ENCODE measurements at regions of chr4 and their contacts with region 1.

Region 1: GRCh38 chr4:5824635-5825034 is 68.3 kb downstream of the CRMP1 start:
- DNase-seq: peak; percentile 23
- ATAC-seq: peak; percentile 50
- H3K4me3 ChIP-seq: no peak overlapping the region
- H3K27ac ChIP-seq: no peak overlapping the region
- H3K4me1 ChIP-seq: peaks cover 0 to 7% of the 10 kb centered on the region in 2 experiments; a peak in 1 of 4 replicates
- H3K27me3 ChIP-seq: peaks cover 17% of the 10 kb centered on the region
- CTCF ChIP-seq: peak; percentile 33 to 68 (median 67); a peak in 5 of 6 replicates
- POLR2A ChIP-seq: no peak
- RAD21 ChIP-seq: peak; percentile 51

Region 2: GRCh38 chr4:5956285-5957021 is 131.8 kb after region 1 on chr4:
- CTCF ChIA-PET with region 1: no interaction called
- POLR2A ChIA-PET with region 1: no interaction called
- RAD21 ChIA-PET with region 1: no interaction called
- intact Hi-C with region 1: no loop called
- DNase-seq: no peak
- ATAC-seq: no peak; the same call in 1 of the 2 replicates
- H3K4me3 ChIP-seq: no peak overlapping the region
- H3K27ac ChIP-seq: no peak overlapping the region
- H3K4me1 ChIP-seq: no peaks in the 10 kb centered on the region
- H3K27me3 ChIP-seq: peaks cover 12% of the 10 kb centered on the region; the same call in 1 of the 2 replicates
- CTCF ChIP-seq: no peak
- POLR2A ChIP-seq: no peak
- RAD21 ChIP-seq: no peak

Region 3: DNA sequence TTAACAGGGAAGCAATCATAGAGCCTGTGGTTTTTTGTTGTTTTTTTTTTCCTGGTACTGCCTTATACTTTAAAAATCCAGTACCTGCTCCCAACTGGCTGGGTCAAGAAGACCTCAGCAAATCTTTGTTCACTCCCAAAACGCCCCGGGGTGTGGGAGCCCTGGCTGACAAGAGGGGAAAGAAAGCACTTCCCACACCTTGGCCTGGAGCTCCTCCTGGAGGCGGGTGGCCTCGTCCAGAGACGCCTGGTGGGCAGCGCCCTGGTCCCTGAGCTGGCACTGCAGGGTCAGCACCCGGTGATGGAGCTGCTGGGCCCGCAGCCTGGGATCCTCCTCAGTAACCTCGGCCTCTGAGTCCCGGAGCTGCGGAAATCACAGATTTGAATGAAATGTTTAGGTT is 155.3 kb after region 1 on chr4:
- CTCF ChIA-PET with region 1: interaction called, 18 read pairs
- POLR2A ChIA-PET with region 1: no interaction called
- RAD21 ChIA-PET with region 1: interaction called, 4 read pairs
- intact Hi-C with region 1: loop called (anchors 1 kb)
- DNase-seq: peak; percentile 7
- ATAC-seq: peak; percentile 95
- H3K4me3 ChIP-seq: no peak overlapping the region
- H3K27ac ChIP-seq: no peak overlapping the region
- H3K4me1 ChIP-seq: no peaks in the 10 kb centered on the region
- H3K27me3 ChIP-seq: peaks cover 33% of the 10 kb centered on the region
- CTCF ChIP-seq: peak; percentile 61 to 64 (median 63); a peak in 5 of 6 replicates
- POLR2A ChIP-seq: no peak
- RAD21 ChIP-seq: peak; percentile 75

Region 4: DNA sequence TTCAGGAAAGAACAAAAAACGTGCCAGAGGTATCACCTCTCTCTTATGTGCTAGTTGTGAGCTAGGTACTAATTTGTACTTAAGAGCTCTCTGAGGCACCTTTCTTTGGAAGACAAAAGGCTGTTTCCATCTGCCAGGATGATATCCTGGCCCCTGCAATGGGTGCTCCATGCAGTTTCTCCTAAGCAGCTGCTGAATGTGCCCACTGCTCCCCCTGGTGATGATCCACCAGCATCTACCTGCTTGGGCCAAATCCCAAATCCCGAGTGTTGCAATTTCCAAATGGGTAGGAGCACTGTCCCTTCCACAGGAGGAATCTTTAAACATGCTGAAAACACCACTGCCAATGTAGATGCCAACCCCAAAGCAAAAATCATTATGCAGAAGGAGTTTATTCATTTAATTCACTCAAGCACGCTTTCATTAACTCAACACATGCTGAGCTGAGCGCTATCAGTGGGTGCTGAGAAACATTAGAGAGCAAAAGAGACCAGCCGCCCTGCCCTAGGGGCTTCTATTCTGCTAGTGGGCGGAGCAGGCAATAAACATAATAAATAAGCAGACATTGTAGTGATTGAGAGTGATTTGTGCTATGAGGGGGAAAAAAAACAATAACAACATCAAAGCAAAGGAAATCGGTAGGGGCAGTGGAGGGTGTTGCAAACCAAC is 263.2 kb after region 1 on chr4:
- CTCF ChIA-PET with region 1: interaction called, 5 read pairs
- POLR2A ChIA-PET with region 1: no interaction called
- RAD21 ChIA-PET with region 1: no interaction called
- intact Hi-C with region 1: loop called (anchors 5 kb)
- DNase-seq: peak; percentile 51
- ATAC-seq: peak; percentile 93
- H3K4me3 ChIP-seq: no peak overlapping the region
- H3K27ac ChIP-seq: no peak overlapping the region
- H3K4me1 ChIP-seq: no peaks in the 10 kb centered on the region
- H3K27me3 ChIP-seq: peaks cover 22% of the 10 kb centered on the region
- CTCF ChIP-seq: peak; percentile 70 to 80 (median 74)
- POLR2A ChIP-seq: no peak
- RAD21 ChIP-seq: peak; percentile 73